Lower leg skin (tissue), 4 donors: ENCODE measurements at regions of chr1 and their contacts with region 1.

Region 1: DNA sequence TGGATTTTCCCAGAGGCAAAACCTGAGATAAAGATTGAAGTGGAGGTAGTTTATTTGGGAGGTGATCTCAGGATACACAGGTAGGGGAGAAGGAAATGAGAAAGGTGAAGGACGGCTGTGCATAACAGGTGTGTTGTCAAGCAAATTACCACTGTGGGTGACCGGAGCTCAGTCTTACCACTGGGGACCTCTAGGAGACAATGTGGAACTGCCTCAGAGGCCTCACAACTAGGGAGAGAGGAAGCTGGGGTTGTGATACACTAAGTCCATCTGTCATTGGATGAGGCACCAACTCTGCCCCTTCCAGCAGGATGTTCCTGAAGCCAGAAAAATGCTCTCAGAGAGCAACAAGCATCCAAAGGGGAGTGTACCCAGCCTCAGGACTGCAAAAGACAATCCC is 32.6 kb downstream of the GRIK3 start:
- DNase-seq: no peak
- H3K4me3 ChIP-seq: no peak overlapping the region
- CTCF ChIP-seq: no peak
- POLR2A ChIP-seq: no peak

Region 2: DNA sequence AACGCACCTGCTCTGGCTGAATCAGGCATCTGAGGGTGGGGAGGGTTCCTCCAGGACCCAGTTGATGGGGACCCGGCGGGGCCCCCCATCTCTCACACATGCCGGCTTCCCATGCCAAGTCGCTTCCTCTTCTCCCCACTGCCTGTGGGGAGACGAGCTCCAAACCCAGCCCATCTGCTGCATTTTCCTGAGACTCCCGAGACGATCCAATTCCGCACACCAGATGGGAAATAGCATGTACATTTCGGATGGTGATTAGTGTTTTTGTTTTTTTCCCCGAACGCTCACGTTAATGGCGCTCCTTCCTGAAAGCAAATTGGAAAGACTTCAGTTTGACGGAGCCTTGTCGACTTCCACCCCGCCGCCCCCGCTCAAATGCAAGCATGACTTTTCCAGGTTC is 45.8 kb after region 1 on chr1:
- intact Hi-C with region 1: loop called (anchors 2 kb)
- DNase-seq: no peak
- H3K4me3 ChIP-seq: no peak overlapping the region
- CTCF ChIP-seq: no peak
- POLR2A ChIP-seq: no peak